ENCODE measurements at regions of chr10 and their contacts with region 1.

Region 1: GRCh38 chr10:98309366-98310355 is 41.7 kb upstream of the LOXL4 start:
- DNase-seq: peak; percentile 74
- H3K4me3 ChIP-seq: no peak overlapping the region
- H3K27ac ChIP-seq: no peak overlapping the region
- H3K4me1 ChIP-seq: no peaks in the 10 kb centered on the region
- H3K27me3 ChIP-seq: peaks cover 8% of the 10 kb centered on the region in 2 experiments
- CTCF ChIP-seq: peak; percentile 89 to 96
- POLR2A ChIP-seq: no peak

Region 2: GRCh38 chr10:97914837-97915211 is 394.8 kb before region 1 on chr10:
- CTCF ChIA-PET with region 1: interaction called, 18 read pairs
- POLR2A ChIA-PET with region 1: no interaction called
- dilution Hi-C with region 1: no loop called
- intact Hi-C with region 1: loop called (anchors 1 kb)
- DNase-seq: peak; percentile 52
- H3K4me3 ChIP-seq: no peak overlapping the region
- H3K27ac ChIP-seq: no peak overlapping the region
- H3K4me1 ChIP-seq: no peaks in the 10 kb centered on the region
- H3K27me3 ChIP-seq: no peaks in the 10 kb centered on the region
- CTCF ChIP-seq: peak; percentile 83 to 96
- POLR2A ChIP-seq: no peak

Region 3: DNA sequence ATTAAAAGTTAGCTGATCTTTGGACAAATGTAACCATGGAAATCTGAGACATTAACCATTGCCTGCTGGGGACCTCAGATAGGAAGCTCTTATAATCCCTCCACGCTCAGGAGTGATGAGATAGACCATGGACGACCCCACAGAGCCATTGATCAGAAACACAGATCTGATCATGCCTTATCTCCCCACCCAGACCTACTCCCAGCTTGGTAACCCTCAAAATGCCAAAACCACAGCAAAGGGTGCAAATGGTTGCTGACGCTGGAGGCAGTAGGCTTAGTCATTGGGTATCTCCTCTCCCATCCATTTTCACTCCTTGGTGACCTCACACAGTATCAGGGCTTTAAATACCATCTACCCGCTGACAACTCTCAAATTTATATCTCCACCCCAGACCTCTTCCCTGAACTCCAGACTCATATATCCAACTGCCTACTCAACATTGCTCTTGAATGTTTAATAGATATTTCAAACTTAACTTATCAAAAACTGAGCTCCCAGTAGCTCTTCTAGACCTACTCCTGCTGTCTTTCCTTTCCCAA is 340.1 kb before region 1 on chr10:
- CTCF ChIA-PET with region 1: no interaction called
- POLR2A ChIA-PET with region 1: no interaction called
- dilution Hi-C with region 1: no loop called
- intact Hi-C with region 1: no loop called
- DNase-seq: no peak
- H3K4me3 ChIP-seq: no peak overlapping the region
- H3K27ac ChIP-seq: no peak overlapping the region
- H3K4me1 ChIP-seq: no peaks in the 10 kb centered on the region
- H3K27me3 ChIP-seq: no peaks in the 10 kb centered on the region
- CTCF ChIP-seq: no peak
- POLR2A ChIP-seq: no peak

Region 4: DNA sequence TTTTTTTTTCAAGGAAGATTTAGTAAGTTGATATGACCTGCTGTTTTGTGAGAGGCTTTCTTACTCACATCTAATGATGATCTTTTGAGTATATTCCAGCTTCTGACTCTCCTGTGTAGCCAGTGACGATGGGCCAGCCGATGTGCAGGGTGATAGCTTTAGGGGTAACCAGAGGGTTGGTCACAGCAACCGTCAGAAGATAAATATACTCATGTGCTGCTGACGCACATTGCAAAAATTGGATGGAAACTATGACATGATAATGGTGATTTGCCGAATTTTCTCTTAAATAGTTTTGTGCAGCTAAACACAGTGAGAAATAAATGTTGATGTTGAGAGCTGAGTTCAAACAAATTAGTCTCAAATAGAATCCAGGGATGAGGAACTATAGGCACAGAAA is 145.7 kb before region 1 on chr10:
- CTCF ChIA-PET with region 1: interaction called, 264 read pairs
- POLR2A ChIA-PET with region 1: no interaction called
- dilution Hi-C with region 1: no loop called
- intact Hi-C with region 1: no loop called
- DNase-seq: no peak
- H3K4me3 ChIP-seq: no peak overlapping the region
- H3K27ac ChIP-seq: no peak overlapping the region
- H3K4me1 ChIP-seq: no peaks in the 10 kb centered on the region
- H3K27me3 ChIP-seq: no peaks in the 10 kb centered on the region
- CTCF ChIP-seq: no peak
- POLR2A ChIP-seq: no peak

Region 5: DNA sequence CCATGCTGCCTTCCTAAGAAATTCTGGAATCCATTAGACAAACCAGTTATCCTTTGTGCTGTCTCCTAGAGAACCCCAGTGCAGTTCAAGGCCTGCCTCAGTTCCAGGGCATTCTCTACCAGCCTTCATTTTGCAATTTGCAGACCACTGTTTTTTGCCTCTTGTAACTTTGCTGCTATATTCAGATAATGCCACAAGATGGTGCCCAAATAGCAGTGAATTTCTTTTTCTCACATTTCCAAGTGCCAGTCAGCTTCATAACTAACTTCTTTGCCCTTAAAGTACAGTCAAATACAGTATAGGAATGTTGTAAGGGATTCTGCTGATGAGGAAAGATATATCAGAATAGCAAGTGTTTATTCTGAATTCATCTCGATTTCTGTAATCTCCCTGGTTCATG is 66.8 kb before region 1 on chr10:
- CTCF ChIA-PET with region 1: interaction called, 68 read pairs
- POLR2A ChIA-PET with region 1: no interaction called
- dilution Hi-C with region 1: no loop called
- intact Hi-C with region 1: loop called (anchors 1 kb)
- DNase-seq: peak; percentile 48
- H3K4me3 ChIP-seq: no peak overlapping the region
- H3K27ac ChIP-seq: no peak overlapping the region
- H3K4me1 ChIP-seq: no peaks in the 10 kb centered on the region
- H3K27me3 ChIP-seq: no peaks in the 10 kb centered on the region
- CTCF ChIP-seq: peak; percentile 29 to 39
- POLR2A ChIP-seq: no peak

Region 6: GRCh38 chr10:98269072-98269912 is 40.4 kb before region 1 on chr10:
- CTCF ChIA-PET with region 1: interaction called, 73 read pairs
- POLR2A ChIA-PET with region 1: no interaction called
- dilution Hi-C with region 1: no loop called
- intact Hi-C with region 1: no loop called
- DNase-seq: peak; percentile 43
- H3K4me3 ChIP-seq: no peak overlapping the region
- H3K27ac ChIP-seq: peak overlapping the region; percentile 15
- H3K4me1 ChIP-seq: peaks cover 17% of the 10 kb centered on the region
- H3K27me3 ChIP-seq: no peaks in the 10 kb centered on the region
- CTCF ChIP-seq: no peak
- POLR2A ChIP-seq: no peak

Region 7: DNA sequence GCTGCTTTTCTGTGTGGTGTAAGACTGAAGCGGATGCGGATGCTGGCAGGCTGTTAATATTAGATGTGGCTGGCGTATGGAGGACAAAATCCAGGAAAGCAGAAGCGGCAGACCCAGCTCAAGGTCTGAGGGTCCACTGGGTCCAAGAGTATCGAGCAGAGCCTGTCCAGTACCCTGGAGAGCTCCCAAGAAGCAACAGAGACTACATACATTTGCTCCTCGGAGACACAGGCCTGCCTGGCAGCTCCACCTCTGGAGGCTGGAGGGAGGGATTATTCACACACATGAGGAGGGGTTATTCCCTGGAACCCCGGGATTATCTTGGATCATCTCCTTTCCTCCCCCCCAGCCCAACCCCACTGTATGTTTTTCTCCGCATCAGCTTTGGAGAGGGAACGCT is 10.3 kb before region 1 on chr10:
- CTCF ChIA-PET with region 1: interaction called, 13 read pairs
- POLR2A ChIA-PET with region 1: no interaction called
- dilution Hi-C with region 1: no loop called
- intact Hi-C with region 1: no loop called
- DNase-seq: no peak
- H3K4me3 ChIP-seq: no peak overlapping the region
- H3K27ac ChIP-seq: no peak overlapping the region
- H3K4me1 ChIP-seq: no peaks in the 10 kb centered on the region
- H3K27me3 ChIP-seq: peaks cover 3 to 15% of the 10 kb centered on the region in 2 experiments
- CTCF ChIP-seq: no peak
- POLR2A ChIP-seq: no peak

Region 8: GRCh38 chr10:98331885-98332284 is 22.2 kb after region 1 on chr10:
- CTCF ChIA-PET with region 1: interaction called, 12 read pairs
- POLR2A ChIA-PET with region 1: no interaction called
- dilution Hi-C with region 1: no loop called
- intact Hi-C with region 1: no loop called
- DNase-seq: no peak
- H3K4me3 ChIP-seq: no peak overlapping the region
- H3K27ac ChIP-seq: no peak overlapping the region
- H3K4me1 ChIP-seq: no peaks in the 10 kb centered on the region
- H3K27me3 ChIP-seq: peaks cover 3 to 8% of the 10 kb centered on the region in 2 experiments
- CTCF ChIP-seq: peak; percentile 41 to 43
- POLR2A ChIP-seq: no peak

Measured in endothelial cell of umbilical vein (primary cell).